PC-9 (cell line): ENCODE measurements at regions of chr16 and their contacts with region 1.

Region 1: DNA sequence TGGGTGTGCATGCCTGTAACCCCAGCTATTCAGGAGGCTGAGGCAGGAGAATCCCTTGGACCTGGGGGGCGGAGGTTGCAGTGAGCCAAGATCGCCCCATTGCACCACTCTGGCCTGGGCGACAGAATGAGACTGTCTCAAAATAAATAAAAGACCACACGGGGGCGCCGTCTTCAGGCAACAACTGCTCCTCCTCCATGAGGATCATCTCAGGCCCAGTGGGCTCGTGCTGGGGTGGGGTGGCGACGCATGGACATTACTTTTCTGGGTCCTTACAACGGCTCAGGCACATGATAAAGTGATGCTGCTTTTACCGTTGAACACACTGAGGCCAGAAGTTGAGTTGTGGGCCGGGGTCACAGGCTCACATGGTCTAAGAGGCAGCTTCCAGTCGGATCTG is 56.2 kb downstream of the PRMT7 start:
- DNase-seq: peak in 1 of 2 experiments; percentile 30
- H3K4me3 ChIP-seq: no peak overlapping the region
- H3K27ac ChIP-seq: no peak overlapping the region
- H3K4me1 ChIP-seq: no peaks in the 10 kb centered on the region
- H3K27me3 ChIP-seq: no peaks in the 10 kb centered on the region
- CTCF ChIP-seq: peak; percentile 57

Region 2: GRCh38 chr16:70324998-70325747 is 1958.1 kb after region 1 on chr16:
- CTCF ChIA-PET with region 1: interaction called, 11 read pairs
- POLR2A ChIA-PET with region 1: no interaction called
- intact Hi-C with region 1: no loop called
- DNase-seq: no peak
- H3K4me3 ChIP-seq: no peak overlapping the region
- H3K27ac ChIP-seq: no peak overlapping the region
- H3K4me1 ChIP-seq: no peaks in the 10 kb centered on the region
- H3K27me3 ChIP-seq: no peaks in the 10 kb centered on the region
- CTCF ChIP-seq: no peak